ENCODE measurements at regions of chr12 and their contacts with region 1.

Region 1: DNA sequence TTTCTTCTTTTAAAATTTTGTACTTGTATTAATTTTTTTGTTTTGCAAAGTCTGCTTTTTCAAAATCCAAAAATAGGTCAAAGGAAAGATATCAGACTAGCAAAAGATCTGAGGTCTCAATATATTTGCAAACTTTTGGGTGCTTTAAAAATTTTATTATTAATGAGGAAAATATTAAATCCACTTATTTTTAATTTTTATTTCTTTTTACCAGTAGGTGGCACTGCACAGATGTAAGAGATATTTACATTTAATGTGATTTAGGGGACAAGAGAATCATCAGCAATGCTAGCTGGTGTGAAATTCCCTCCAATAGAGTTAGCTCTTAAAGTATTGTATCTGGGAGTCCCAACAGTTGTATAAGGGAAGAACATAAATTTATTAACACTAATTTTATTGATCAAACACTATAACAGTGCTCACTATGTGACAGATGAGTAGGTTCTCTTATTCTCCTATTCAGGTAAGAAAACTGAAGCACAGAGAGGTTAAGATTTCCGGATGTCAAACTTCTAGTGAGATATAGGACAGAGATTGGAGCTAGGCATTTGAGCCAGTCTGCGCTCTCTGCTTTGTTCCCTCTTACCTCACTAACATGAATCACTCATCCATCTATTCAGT is 30.5 kb downstream of the ALX1 start:
- DNase-seq: no peak
- CTCF ChIP-seq: no peak

Region 2: DNA sequence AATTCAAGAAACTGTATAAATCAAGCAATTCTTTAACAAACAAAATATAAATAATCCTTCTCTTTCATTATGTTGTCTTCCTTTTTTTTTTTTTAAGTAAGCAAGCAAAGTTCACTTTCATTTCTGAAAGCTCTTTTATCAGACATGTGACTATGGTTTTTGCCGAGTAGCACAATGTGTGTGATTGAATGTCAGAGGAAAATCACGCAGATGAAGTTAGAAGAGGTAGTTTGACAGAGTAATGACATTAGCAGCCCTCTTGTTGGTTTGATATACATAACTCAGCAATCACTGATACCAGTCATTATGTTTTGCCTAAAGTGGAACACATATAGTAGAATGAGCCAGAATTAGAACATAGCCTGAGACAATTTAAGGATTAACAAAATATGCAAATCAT is 11.5 kb before region 1 on chr12:
- CTCF ChIA-PET with region 1: interaction called, 18 read pairs
- POLR2A ChIA-PET with region 1: no interaction called
- DNase-seq: no peak
- CTCF ChIP-seq: no peak

Region 3: DNA sequence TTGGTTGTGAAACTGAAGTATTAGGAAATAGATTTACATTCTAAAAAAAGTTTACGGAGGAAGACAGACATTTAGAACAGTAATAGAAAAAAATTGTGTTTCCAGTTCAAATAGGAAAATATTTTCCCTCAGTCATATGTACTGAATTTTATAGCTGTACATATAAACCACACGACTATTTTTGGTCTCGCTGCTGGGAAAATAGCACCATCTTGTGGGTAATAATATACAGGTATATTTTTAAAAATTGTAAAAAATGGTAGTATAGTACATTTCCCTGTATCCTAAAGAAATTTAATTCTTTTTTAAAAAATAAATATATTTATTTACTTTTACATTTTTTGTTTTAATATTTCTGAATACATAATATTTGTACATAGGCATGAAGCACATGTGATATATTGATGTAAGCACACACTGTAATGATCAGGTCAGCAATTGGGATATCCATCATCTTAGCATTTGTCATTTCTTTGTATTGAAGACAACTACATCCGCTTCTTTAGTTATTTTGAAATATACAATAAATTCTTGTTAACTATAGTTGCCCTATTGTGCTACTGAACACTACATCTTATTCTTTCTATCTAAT is 138.1 kb after region 1 on chr12:
- CTCF ChIA-PET with region 1: interaction called, 10 read pairs
- POLR2A ChIA-PET with region 1: no interaction called
- DNase-seq: no peak
- CTCF ChIP-seq: no peak

Measured in GM10248 (cell line).